Mammary epithelial cell (primary cell): ENCODE measurements at regions of chr10 and their contacts with region 1.

Region 1: GRCh38 chr10:22244001-22244400 is 26.2 kb upstream of the EBLN1 start:
- DNase-seq: no peak
- H3K4me3 ChIP-seq: no peak overlapping the region
- H3K27ac ChIP-seq: no peak overlapping the region
- H3K4me1 ChIP-seq: peaks cover 17% of the 10 kb centered on the region
- H3K27me3 ChIP-seq: no peaks in the 10 kb centered on the region
- CTCF ChIP-seq: no peak

Region 2: DNA sequence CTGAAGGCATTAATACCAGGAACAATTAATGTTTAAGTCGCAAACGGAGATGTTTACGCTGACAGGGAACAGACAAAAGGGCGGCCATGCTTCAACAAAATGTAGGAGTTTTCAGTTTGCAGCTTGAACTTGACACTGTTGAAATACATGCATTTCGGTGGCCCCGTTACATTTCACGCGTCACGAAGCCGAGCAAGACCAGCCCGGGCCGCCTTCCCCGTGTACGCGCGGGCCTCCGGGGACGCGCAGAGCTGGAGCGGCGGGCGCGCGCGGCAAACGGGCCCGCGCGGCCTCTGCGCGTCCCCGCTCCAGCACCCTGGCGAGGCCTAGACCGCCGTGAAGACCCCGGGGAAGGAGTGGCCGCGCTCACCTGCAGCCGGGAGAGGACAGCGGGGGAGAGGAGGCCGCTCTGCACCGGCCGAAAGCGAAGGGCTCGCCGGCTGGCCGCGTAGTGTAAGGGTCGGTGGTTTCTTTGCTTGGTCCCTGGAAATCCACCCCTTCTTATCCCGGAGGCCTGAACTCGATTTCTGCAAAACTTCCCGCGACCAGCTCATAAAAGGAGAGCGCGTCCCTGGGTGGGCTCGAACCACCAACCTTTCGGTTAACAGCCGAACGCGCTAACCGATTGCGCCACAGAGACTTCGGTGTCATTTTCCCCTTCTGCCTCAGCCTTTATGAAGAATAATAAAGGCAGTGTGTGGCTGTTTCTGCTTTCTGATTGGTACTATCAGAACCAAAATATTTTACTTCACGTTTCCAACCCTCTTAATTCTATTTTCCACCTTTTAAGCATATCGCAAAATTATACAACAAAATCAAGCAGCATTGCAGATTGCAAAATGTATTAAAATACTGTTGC is 14.8 kb before region 1 on chr10:
- CTCF ChIA-PET with region 1: no interaction called
- dilution Hi-C with region 1: no loop called
- in situ Hi-C with region 1: no loop called
- intact Hi-C with region 1: loop called (anchors 2 kb)
- DNase-seq: peak; percentile 89
- H3K4me3 ChIP-seq: peak overlapping the region; percentile 74 to 90 (median 88)
- H3K27ac ChIP-seq: peak overlapping the region; percentile 15
- H3K4me1 ChIP-seq: no peaks in the 10 kb centered on the region
- H3K27me3 ChIP-seq: peaks cover 3% of the 10 kb centered on the region
- CTCF ChIP-seq: no peak

Region 3: GRCh38 chr10:22259280-22259679 is 15.3 kb after region 1 on chr10:
- CTCF ChIA-PET with region 1: no interaction called
- dilution Hi-C with region 1: no loop called
- in situ Hi-C with region 1: no loop called
- intact Hi-C with region 1: no loop called
- DNase-seq: no peak
- H3K4me3 ChIP-seq: no peak overlapping the region
- H3K27ac ChIP-seq: no peak overlapping the region
- H3K4me1 ChIP-seq: no peaks in the 10 kb centered on the region
- H3K27me3 ChIP-seq: peaks cover 3% of the 10 kb centered on the region
- CTCF ChIP-seq: no peak

Region 4: GRCh38 chr10:22285130-22285529 is 41.1 kb after region 1 on chr10:
- CTCF ChIA-PET with region 1: no interaction called
- dilution Hi-C with region 1: no loop called
- in situ Hi-C with region 1: no loop called
- intact Hi-C with region 1: no loop called
- DNase-seq: no peak
- H3K4me3 ChIP-seq: no peak overlapping the region
- H3K27ac ChIP-seq: no peak overlapping the region
- H3K4me1 ChIP-seq: no peaks in the 10 kb centered on the region
- H3K27me3 ChIP-seq: no peaks in the 10 kb centered on the region
- CTCF ChIP-seq: no peak